WTC11 (cell line): ENCODE measurements at regions of chr2 and their contacts with region 1.

Region 1: DNA sequence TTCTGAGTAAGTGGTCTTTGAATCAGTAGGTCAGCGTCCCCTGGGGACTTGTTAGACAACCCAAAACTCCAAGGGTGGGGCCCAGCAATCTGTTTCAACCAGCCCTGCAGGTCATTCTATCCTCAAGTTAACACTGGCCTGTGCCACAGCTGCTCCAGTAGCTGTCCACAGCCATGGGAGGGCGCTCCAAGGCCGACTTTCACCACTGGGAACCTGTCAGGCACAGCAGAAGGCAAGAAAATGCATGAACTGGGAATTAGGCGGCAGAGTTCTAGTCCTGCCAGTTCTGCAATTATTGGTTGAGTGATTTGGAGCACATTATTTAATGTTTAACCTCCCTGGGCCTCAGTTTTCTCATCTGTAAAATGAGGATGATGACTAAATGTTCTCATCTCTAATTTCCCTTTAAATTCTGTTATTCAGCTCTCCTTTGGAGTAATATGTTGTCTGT is 17.4 kb upstream of the MRPL33 start:
- DNase-seq: peak; percentile 93
- ATAC-seq: peak; percentile 87
- H3K4me3 Mint-ChIP-seq: peak overlapping the region; percentile 75; the same call in 1 of the 2 replicates
- H3K27ac Mint-ChIP-seq: no peak overlapping the region
- H3K4me1 Mint-ChIP-seq: peaks cover 25% of the 10 kb centered on the region
- H3K27me3 Mint-ChIP-seq: no peaks in the 10 kb centered on the region
- CTCF ChIP-seq: peak; percentile 85

Region 2: DNA sequence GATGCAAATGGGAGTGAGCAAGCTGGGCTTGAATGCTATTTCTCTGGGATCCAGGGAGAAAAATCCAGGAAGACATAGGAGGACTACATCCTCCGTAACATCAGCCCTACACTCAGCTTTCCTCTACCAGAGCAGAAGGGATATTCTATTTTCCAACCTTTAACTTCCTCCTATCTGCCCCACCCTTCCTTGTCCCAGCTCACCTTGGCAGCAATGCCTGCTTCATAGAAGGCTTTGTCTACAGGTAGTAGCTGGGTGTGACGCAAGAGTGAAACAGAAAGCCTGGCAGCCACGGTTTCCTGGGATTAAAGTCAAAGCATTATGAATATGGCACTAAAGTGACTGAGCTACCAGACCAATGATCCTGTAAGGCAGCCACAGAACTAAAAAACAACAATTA is 308.1 kb before region 1 on chr2:
- CTCF ChIA-PET with region 1: no interaction called
- POLR2A ChIA-PET with region 1: no interaction called
- DNase-seq: no peak
- ATAC-seq: no peak
- H3K4me3 Mint-ChIP-seq: no peak overlapping the region
- H3K27ac Mint-ChIP-seq: peak overlapping the region; percentile 83
- H3K4me1 Mint-ChIP-seq: peaks cover 14% of the 10 kb centered on the region
- H3K27me3 Mint-ChIP-seq: no peaks in the 10 kb centered on the region
- CTCF ChIP-seq: no peak

Region 3: DNA sequence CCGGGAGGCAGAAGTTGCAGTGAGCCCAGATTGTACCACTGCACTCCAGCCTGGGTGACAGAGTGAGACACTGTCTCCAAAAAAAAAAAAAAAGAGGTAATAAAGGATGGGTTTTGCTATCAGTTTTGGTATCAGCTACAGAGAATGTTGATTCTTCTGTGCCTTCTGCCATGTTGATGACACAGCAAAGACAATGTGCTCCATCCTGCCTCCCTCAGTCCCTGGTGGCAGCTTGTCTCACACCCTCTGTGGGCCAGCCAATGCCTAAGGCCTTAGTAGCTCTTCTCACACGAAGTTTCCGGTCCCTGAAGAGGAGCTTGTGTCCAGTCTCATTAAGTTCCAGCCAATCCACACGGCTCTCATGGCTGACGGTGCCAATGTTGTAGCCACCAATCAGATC is 282.2 kb before region 1 on chr2:
- CTCF ChIA-PET with region 1: no interaction called
- POLR2A ChIA-PET with region 1: no interaction called
- DNase-seq: no peak
- ATAC-seq: no peak
- H3K4me3 Mint-ChIP-seq: no peak overlapping the region
- H3K27ac Mint-ChIP-seq: peak overlapping the region; percentile 58; the same call in 1 of the 2 replicates
- H3K4me1 Mint-ChIP-seq: no peaks in the 10 kb centered on the region
- H3K27me3 Mint-ChIP-seq: no peaks in the 10 kb centered on the region
- CTCF ChIP-seq: no peak

Region 4: GRCh38 chr2:27703638-27704341 is 50.4 kb before region 1 on chr2:
- CTCF ChIA-PET with region 1: interaction called, 23 read pairs
- POLR2A ChIA-PET with region 1: interaction called, 10 read pairs
- DNase-seq: peak; percentile 92
- ATAC-seq: peak; percentile 86
- H3K4me3 Mint-ChIP-seq: no peak overlapping the region
- H3K27ac Mint-ChIP-seq: no peak overlapping the region
- H3K4me1 Mint-ChIP-seq: no peaks in the 10 kb centered on the region; the same call in 1 of the 2 replicates
- H3K27me3 Mint-ChIP-seq: no peaks in the 10 kb centered on the region
- CTCF ChIP-seq: peak; percentile 88

Region 5: GRCh38 chr2:27715318-27716210 is 38.6 kb before region 1 on chr2:
- CTCF ChIA-PET with region 1: interaction called, 5 read pairs
- POLR2A ChIA-PET with region 1: interaction called, 10 read pairs
- DNase-seq: peak; percentile 35
- ATAC-seq: peak; percentile 20
- H3K4me3 Mint-ChIP-seq: peak overlapping the region; percentile 81
- H3K27ac Mint-ChIP-seq: no peak overlapping the region
- H3K4me1 Mint-ChIP-seq: peaks cover 18% of the 10 kb centered on the region
- H3K27me3 Mint-ChIP-seq: peaks cover 17% of the 10 kb centered on the region
- CTCF ChIP-seq: no peak

Region 6: GRCh38 chr2:27723372-27724144 is 30.6 kb before region 1 on chr2:
- CTCF ChIA-PET with region 1: interaction called, 72 read pairs
- POLR2A ChIA-PET with region 1: interaction called, 11 read pairs
- DNase-seq: peak; percentile 72
- ATAC-seq: peak; percentile 88
- H3K4me3 Mint-ChIP-seq: no peak overlapping the region
- H3K27ac Mint-ChIP-seq: peak overlapping the region; percentile 49; the same call in 1 of the 2 replicates
- H3K4me1 Mint-ChIP-seq: peaks cover 21% of the 10 kb centered on the region
- H3K27me3 Mint-ChIP-seq: no peaks in the 10 kb centered on the region
- CTCF ChIP-seq: peak; percentile 66

Region 7: DNA sequence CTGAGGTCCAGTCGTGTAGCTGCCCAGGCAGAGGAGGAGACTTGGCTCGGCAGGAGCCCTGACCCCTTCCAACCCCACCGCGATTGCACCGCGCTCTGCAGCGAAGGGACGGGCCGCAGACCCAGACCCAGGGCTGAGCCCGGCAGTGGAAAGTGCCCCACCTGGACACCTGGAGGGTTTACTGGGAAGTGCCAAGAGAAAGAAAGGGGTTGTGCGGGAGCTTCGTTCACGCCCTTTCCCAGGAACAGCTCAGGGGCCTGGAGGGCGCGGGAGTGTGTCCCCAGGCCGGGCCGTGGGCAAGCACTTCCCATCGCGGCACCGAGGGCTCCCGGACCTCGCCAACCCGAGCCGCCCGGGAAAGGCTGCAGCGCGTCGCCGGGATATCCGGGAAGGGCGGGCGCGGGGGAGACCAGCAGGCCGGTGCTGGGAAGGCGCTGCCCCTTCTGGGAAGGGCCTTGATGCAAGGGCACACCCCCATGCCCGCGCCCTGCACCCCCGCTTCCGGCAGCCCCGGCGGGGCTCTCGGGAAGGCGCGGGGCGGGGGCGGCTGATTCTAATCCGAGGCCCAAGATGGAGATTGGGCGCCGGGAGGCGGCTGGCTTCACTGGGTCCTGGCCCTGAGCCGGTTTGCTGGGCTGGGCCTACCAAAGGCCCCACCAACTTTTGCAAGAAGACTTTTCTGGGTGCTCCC is 18.8 kb before region 1 on chr2:
- CTCF ChIA-PET with region 1: interaction called, 4 read pairs
- POLR2A ChIA-PET with region 1: interaction called, 15 read pairs
- DNase-seq: peak; percentile 76
- ATAC-seq: peak; percentile 91
- H3K4me3 Mint-ChIP-seq: peak overlapping the region; percentile 78
- H3K27ac Mint-ChIP-seq: peak overlapping the region; percentile 72
- H3K4me1 Mint-ChIP-seq: peaks cover 19% of the 10 kb centered on the region
- H3K27me3 Mint-ChIP-seq: peaks cover 14% of the 10 kb centered on the region
- CTCF ChIP-seq: no peak

Region 8: GRCh38 chr2:27766270-27766627 is 12.1 kb after region 1 on chr2:
- CTCF ChIA-PET with region 1: interaction called, 4 read pairs
- POLR2A ChIA-PET with region 1: interaction called, 13 read pairs
- DNase-seq: no peak
- ATAC-seq: no peak
- H3K4me3 Mint-ChIP-seq: no peak overlapping the region
- H3K27ac Mint-ChIP-seq: no peak overlapping the region
- H3K4me1 Mint-ChIP-seq: peaks cover 5% of the 10 kb centered on the region
- H3K27me3 Mint-ChIP-seq: peaks cover 9% of the 10 kb centered on the region
- CTCF ChIP-seq: no peak

Region 9: GRCh38 chr2:27890146-27890923 is 136.2 kb after region 1 on chr2 and contains the starts of genes BABAM2 and RBKS:
- CTCF ChIA-PET with region 1: interaction called, 11 read pairs
- POLR2A ChIA-PET with region 1: interaction called, 7 read pairs
- DNase-seq: peak; percentile 84
- ATAC-seq: peak; percentile 92
- H3K4me3 Mint-ChIP-seq: peak within 1 kb of the TSS; percentile 97
- H3K27ac Mint-ChIP-seq: peak within 1 kb of the TSS; percentile 98
- H3K4me1 Mint-ChIP-seq: peaks cover 8% of the 10 kb centered on the region
- H3K27me3 Mint-ChIP-seq: no peaks in the 10 kb centered on the region
- CTCF ChIP-seq: no peak
- total RNA-seq, gene BABAM2: 16.5 to 21.5 TPM (median 21.0 TPM) in 3 replicates
- total RNA-seq, gene RBKS: 1.2 to 1.7 TPM (median 1.6 TPM) in 3 replicates

Region 10: GRCh38 chr2:28927878-28928277 is 1173.7 kb after region 1 on chr2:
- CTCF ChIA-PET with region 1: no interaction called
- POLR2A ChIA-PET with region 1: no interaction called
- DNase-seq: no peak
- ATAC-seq: no peak
- H3K4me3 Mint-ChIP-seq: no peak overlapping the region
- H3K27ac Mint-ChIP-seq: no peak overlapping the region
- H3K4me1 Mint-ChIP-seq: no peaks in the 10 kb centered on the region
- H3K27me3 Mint-ChIP-seq: no peaks in the 10 kb centered on the region
- CTCF ChIP-seq: no peak